ENCODE measurements at regions of chr6 and their contacts with region 1.

Region 1: GRCh38 chr6:36623547-36624459 is 29.6 kb downstream of the SRSF3 start:
- DNase-seq: peak; percentile 88
- H3K4me3 ChIP-seq: no peak overlapping the region
- H3K27ac ChIP-seq: no peak overlapping the region
- H3K4me1 ChIP-seq: no peaks in the 10 kb centered on the region
- H3K27me3 ChIP-seq: no peaks in the 10 kb centered on the region
- CTCF ChIP-seq: peak; percentile 93

Region 2: DNA sequence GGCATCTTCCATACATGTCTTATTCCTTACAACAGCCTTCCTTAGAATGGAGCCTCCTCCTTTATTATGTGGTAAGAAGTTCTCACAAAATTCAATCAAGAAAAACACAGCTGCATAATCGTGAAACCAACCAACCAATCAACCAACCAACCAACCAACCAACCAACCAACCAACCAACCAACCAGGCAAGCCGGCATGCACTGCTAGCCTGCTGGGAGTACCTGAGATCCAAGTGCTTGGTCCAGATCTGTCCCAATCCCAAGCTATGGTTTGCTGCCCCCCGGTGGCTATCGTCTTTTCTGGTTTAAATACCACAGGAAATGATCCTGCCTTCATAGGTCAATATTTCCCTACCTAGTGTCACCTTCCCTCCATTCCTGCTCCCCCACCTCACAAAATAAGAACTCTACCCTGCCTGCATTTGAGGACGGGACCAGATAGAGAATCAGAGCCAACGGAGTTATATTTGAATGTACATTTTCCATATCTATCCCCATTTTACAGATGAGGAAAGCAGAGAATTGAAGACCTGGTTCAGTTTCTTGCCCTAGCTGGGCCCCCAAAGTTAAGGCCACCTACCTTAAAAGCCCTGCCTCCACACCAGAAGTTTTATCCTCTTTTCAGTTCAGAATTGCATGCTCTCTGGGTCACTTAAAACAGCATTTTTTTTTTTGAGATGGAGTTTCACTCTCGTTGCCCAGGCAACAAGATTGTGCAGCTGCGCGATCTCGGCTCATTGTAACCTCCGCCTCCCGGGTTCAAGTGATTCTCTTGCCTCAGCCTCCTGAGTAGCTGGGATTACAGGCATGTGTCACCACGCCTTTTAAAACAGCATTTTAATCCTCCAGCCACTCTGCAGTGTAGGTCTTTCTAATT is 100.9 kb after region 1 on chr6:
- CTCF ChIA-PET with region 1: no interaction called
- POLR2A ChIA-PET with region 1: no interaction called
- intact Hi-C with region 1: loop called (anchors 1 kb)
- DNase-seq: peak; percentile 58
- H3K4me3 ChIP-seq: no peak overlapping the region
- H3K27ac ChIP-seq: no peak overlapping the region
- H3K4me1 ChIP-seq: peaks cover 8% of the 10 kb centered on the region
- H3K27me3 ChIP-seq: no peaks in the 10 kb centered on the region
- CTCF ChIP-seq: peak; percentile 66